ENCODE measurements at regions of chr6 and their contacts with region 1.

Region 1: GRCh38 chr6:73732845-73733675 is 37.1 kb downstream of the CD109 start:
- DNase-seq: peak in 1 of 2 donors; percentile 45
- ATAC-seq: peak; percentile 54 to 75 (median 60)
- H3K4me3 ChIP-seq: no peak overlapping the region
- H3K27ac ChIP-seq: no peak overlapping the region
- H3K4me1 ChIP-seq: no peaks in the 10 kb centered on the region
- H3K27me3 ChIP-seq: no peaks in the 10 kb centered on the region
- CTCF ChIP-seq: peak; percentile 76

Region 2: DNA sequence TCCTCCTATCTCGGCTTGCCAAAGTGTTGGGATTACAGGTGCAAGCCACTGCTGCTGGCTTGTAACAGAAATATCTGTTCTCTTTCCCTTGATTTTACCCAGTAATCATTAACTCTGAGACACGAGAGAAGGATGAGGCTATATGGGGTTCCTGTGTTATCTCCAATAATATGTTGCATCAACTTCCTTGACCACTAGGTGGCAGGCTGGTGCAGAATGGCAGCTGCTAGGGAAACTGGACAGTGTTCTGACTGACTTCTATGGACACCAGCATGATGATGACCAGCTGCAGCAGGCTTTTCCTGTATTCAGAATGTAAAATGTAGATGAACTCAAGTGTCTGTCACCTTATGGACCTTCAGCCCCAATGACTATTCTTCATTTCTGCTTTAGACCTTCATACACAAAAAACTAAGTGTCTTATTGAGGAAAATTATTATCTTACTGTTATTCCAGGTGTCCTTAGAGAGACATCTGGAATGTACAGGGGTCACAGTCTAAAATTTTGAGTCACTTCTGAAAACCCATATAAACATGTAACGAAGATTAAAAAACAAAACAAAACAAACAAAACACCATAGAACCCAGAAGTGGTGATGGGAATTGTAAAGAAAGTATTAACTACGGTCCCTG is 57.5 kb before region 1 on chr6:
- intact Hi-C with region 1: loop called (anchors 1 to 5 kb)
- DNase-seq: peak; percentile 57 to 71
- ATAC-seq: peak; percentile 67 to 86 (median 80)
- H3K4me3 ChIP-seq: no peak overlapping the region
- H3K27ac ChIP-seq: no peak overlapping the region
- H3K4me1 ChIP-seq: no peaks in the 10 kb centered on the region
- H3K27me3 ChIP-seq: no peaks in the 10 kb centered on the region
- CTCF ChIP-seq: peak; percentile 92

Region 3: DNA sequence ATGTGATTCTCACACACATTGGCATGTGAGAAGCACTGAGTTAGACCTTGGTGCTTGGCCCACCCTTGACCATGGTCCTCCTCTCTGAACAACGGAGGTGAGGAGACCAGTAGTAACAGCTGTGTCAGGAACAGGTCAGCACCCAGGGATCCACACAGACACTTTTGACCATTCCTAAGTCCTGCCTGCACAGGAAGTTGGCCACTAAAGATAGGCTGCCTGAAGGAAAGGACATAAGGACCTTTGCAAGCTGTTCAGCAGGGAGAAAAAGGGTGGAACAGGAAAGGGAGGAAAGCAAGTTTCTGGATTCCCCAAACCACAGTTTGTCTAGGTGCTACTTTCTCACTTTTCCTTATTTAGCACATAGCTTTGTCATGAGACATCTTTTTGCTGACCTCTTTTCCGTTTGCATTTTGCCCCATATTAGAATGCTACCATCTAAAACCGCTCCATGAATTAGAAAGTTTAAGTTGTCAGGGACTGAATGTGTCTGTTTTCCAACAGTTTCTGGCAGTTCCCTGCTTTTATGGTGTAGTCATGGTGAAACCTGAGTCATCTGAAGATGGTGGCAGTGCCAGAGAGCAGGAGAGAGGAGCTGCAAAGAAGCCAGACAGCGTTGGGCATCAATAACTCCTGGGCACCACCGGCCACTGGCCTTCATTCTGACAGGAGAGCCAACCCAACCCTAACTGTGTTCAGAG is 38.2 kb before region 1 on chr6:
- intact Hi-C with region 1: no loop called
- DNase-seq: no peak
- ATAC-seq: no peak
- H3K4me3 ChIP-seq: peak overlapping the region; percentile 74
- H3K27ac ChIP-seq: no peak overlapping the region
- H3K4me1 ChIP-seq: no peaks in the 10 kb centered on the region
- H3K27me3 ChIP-seq: peaks cover 0 to 25% (median 5%) of the 10 kb centered on the region in 3 donors
- CTCF ChIP-seq: no peak

Region 4: DNA sequence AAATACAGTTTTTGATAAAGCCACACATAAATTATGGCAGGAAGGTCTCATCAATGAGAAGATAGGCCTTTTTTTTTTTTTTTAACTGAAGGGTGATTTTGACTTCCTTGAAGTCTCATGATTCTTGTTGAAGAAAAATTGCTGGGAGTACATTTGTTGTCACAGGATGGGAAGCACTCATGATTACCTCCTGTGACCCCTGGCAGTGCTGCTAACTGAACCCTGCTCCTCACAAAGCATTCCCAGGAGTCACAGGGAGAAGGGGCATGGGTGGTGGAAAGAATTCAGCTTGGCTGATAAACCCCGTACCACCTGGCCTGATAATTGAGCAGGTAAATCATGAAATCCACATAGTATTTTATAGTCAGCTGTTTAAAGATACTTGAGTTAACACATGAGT is 49.9 kb after region 1 on chr6:
- intact Hi-C with region 1: no loop called
- DNase-seq: no peak
- ATAC-seq: no peak
- H3K4me3 ChIP-seq: no peak overlapping the region
- H3K27ac ChIP-seq: no peak overlapping the region
- H3K4me1 ChIP-seq: no peaks in the 10 kb centered on the region
- H3K27me3 ChIP-seq: no peaks in the 10 kb centered on the region
- CTCF ChIP-seq: no peak

Region 5: DNA sequence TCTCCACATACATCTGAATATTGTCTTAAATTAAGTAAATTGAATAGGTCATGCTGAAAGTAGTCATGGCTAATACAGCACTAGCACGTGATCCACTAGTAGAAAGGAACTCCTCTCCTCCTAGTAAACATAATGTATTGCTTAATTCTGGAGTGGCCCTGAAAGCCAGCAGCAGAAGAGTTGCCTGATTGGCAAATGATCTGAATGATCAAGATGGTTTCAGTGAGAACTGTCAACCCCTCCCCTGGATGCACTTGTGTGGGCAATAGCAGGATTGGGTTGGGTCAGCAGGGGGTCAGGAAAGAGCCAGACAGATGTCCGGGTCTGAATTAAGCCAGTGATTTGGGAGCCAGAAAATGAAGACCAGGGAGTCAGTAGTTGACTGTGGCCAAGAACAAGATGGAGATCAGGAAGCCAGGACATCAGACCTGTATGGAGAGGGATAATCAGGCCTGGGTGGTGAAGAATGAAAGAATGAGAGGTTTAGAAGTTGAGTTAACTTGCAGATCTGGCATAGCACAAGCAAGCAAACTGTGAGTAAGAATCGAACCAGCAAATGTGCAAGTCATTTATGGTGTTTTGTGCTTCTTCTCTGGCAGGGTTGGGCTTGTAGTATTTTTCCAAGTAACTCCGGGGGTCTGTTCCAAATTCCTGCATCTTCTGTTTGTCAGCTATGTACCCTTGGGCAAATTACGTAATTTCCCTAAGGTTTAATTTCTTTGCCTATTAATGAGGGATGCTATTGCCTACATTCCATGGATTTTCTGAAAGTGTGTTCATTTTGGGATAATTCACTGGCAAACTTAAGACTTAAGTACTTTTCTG is 267.8 kb after region 1 on chr6:
- intact Hi-C with region 1: no loop called
- DNase-seq: no peak
- ATAC-seq: no peak
- H3K4me3 ChIP-seq: no peak overlapping the region
- H3K27ac ChIP-seq: no peak overlapping the region
- H3K4me1 ChIP-seq: no peaks in the 10 kb centered on the region
- H3K27me3 ChIP-seq: no peaks in the 10 kb centered on the region
- CTCF ChIP-seq: no peak

Measured in psoas muscle (tissue), 8 donors.